Dorsolateral prefrontal cortex (tissue), 120 donors: ENCODE measurements at regions of chr17 and their contacts with region 1.

Region 1: GRCh38 chr17:28684963-28685362 is 23.0 kb downstream of the SUPT6H start:
- DNase-seq: peak in 9 of 10 donors; percentile 41 to 91 (median 79)
- H3K4me3 ChIP-seq: peak overlapping the region in 2 of 59 donors; percentile 1
- H3K27ac ChIP-seq: peak overlapping the region in 55 of 59 donors; percentile 58 to 96 (median 82)
- H3K27me3 ChIP-seq: no peaks in the 10 kb centered on the region
- CTCF ChIP-seq: peak in 55 of 56 donors; percentile 18 to 73 (median 58)

Region 2: GRCh38 chr17:28717578-28718333 is 32.8 kb after region 1 on chr17 and contains the start of gene RAB34:
- intact Hi-C with region 1: loop called in 1 of 2 experiments (anchors 5 kb)
- DNase-seq: no peak
- H3K4me3 ChIP-seq: peak within 1 kb of the TSS; percentile 28 to 98 (median 59)
- H3K27ac ChIP-seq: peak within 1 kb of the TSS in 55 of 59 donors; percentile 29 to 97 (median 85)
- H3K27me3 ChIP-seq: peaks cover 0 to 24% (median 13%) of the 10 kb centered on the region in 45 donors
- CTCF ChIP-seq: peak in 15 of 56 donors; percentile 11 to 37 (median 22)
- total RNA-seq, gene RAB34: 12.0 to 55.8 (median 25.0) TPM

Region 3: DNA sequence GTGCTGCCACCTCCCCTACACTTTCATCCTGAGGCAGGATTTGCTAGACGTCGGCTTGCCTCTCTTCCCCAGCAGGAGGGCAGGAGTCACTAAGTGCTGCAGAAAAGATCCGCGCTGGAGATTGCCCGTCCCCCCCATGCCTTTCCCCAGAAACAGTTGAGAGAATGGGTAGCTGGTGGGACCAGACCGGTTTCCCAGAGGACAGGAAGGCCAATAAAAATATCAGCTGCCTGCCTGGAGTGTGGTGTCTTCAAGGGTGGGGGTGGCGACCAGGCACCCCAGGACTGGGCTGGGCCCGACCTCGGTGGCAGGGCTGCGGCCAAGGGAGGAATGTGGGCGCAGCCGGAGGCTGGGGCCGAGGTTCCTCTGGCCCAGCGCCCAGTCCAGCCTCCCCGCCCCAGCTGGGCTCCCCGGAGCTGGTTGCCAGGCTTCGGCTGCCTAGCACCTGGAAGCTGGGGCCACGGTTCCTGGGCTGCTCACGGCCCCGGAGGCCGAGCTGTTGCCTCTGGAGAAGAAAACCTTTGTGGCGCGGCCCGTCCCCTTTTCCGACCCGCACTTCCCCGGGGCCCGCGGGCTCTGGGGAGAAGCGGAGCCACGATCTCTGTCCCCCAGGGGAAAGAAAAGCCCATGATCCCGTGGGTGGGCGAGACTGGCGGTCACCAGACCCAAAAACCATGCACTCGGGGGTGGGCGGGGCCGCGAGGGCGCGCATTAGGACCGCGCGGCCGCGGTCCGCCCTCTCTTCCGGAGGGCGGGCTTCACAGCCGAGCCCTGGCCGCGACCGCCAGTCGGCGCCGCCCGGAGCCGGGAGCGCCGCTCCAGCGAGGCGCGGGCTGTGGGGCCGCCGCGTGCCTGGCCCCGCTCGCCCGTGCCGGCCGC is 58.5 kb after region 1 on chr17 and contains the start of gene TRAF4:
- intact Hi-C with region 1: loop called in 1 of 2 experiments (anchors 10 kb)
- DNase-seq: peak in 7 of 10 donors; percentile 55 to 82 (median 68)
- H3K4me3 ChIP-seq: peak within 1 kb of the TSS; percentile 57 to 98 (median 83)
- H3K27ac ChIP-seq: peak within 1 kb of the TSS; percentile 74 to 100 (median 98)
- H3K27me3 ChIP-seq: no peaks in the 10 kb centered on the region
- CTCF ChIP-seq: peak in 26 of 56 donors; percentile 6 to 57 (median 26)
- total RNA-seq, gene TRAF4: 16.6 to 92.5 (median 39.5) TPM